Posterior vena cava (tissue), 2 donors: ENCODE measurements at regions of chr2 and their contacts with region 1.

Region 1: GRCh38 chr2:112601751-112602150 is 17.3 kb downstream of the CHCHD5 start:
- DNase-seq: no peak

Region 2: DNA sequence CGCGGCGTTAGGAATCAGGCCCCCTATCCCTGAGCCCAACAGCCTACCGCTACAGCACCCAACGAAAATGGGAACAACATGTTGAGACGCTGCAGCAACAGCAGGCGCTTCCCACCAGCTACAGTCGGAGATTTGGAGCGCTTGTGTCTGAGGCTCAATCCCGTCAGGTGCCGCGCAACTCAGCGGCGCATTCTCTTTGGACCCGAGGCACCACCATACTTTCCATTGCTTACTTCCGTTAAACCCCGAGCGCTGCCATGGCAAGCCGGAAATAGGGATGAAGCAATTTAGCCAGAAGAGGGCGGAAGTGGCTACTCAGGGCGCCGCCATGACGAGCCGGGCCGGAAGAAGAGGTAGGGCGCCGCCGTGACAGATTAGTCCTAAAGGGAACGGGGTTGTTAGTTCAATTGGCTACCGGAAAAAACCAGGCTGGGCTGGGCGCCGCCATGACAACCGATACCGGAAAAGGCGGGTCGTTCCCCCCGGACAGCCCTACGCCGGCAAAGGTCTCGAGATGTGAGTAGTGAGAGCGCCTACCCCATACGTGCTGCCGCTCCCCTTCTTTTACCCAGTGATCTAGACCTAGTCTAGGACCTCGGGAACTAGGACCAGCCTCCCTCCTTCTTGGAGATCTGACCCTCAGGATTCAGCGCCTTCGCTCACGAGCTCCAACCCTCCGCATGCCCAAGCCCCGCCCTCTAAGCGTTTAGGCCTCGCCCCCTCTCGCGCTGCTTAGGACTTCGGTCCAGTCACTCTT is 17.4 kb before region 1 on chr2 and contains the start of gene CHCHD5:
- intact Hi-C with region 1: loop called in 1 of 2 experiments (anchors 1 kb)
- DNase-seq: peak; percentile 99
- total RNA-seq, gene CHCHD5: 12.7 to 23.8 TPM

Region 3: DNA sequence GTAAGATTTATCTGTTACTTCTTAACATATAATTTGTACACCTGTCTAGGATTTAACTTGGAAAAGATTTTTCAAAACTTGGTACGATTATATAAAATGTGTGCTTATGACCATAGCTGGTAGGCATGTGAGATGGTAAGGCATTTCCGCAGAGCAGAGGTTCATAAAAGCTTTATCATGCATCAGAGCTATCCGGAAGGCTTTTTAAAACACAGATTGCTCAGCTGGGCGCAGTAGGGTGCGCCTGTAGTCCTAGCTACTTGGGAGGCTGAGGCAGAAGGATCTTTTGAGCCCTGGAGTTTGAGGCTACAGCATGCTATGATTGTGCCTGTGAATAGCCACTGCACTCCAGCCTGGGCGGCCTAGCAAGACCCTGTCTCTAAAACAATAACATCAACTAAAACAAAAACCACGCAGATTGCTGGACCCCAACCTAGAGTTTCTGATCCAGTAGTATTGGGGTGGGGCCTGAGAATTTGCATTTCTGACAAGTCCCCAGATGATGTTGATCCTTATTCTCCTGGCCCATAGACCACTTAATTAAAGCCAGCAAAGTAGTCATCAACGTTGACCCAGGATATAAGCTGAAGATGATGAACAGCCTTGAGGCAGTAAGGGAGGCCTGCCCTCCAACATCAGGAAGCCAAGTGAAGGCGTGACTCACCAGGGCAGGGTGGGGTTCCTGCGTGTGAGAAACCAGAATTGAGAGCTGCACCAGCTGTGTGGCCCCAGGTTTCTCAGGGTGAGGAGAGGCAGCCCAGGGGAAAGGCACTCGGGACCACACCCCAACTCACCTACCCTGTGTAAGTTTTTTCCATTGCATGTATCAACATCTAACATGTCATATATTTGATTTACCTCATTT is 22.4 kb after region 1 on chr2:
- intact Hi-C with region 1: no loop called
- DNase-seq: peak; percentile 89

Region 4: DNA sequence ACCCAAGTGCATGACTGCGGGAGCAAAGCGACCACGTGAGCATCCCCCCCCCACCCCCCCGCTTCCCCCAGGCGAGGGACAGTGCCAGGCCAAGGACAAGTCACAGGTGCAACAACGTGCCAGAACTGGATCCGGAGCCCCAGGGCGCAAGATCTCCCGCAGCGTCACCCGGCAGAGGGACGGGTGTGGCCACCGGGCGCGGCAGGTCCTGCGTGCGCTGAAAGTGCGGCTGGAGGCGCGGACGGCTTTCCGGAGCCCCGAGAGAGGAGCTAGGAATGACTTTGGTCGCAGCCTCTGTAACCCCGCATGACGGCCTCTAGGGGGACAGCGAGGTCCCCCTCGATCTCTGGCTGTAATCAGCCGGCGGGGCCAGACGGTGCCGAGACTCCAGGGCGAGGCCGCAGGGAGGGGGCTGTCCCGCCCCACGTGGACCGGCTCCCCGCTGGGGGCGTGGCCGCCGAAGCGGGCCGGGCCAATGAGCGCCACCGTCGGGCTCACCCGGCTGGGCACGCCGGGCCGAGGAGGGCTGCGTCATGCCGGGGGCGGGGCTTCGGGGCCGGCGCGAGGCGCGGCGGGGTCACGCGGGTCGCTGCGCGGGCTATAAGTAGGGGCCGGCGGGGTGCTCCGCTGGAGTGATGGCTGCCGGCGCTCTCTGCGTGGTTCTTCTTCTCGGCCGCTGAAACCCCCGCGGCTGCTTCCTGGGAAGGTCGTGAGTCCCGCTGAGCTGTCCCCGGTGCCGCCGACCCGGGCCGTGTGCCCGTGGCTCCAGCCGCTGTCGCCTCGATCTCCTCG is 43.8 kb after region 1 on chr2 and contains the start of gene SLC20A1:
- intact Hi-C with region 1: loop called in 1 of 2 experiments (anchors 10 kb)
- DNase-seq: peak; percentile 99
- total RNA-seq, gene SLC20A1: 41.0 to 43.6 TPM

Region 5: GRCh38 chr2:112726497-112727190 is 124.9 kb after region 1 on chr2:
- intact Hi-C with region 1: loop called in 1 of 2 experiments (anchors 5 kb)
- DNase-seq: peak; percentile 98

Region 6: DNA sequence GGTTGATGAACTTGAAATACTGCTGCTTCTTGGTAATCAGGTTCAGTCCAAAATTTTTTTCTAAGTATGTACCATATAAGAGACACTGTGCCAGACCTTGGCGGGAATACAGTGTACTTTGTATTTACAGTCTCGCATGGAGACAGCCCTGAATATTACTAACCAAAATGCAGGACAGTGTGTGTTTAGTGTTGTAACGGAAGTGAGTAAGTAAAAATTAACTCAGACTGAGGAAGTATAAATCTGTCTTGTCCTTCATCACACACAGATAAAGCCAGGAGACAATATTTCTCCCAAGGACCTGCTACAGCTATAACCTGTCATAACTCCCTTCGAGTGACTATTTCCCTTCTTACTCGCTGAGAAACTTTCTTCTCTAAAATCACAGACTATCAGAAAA is 1365.1 kb after region 1 on chr2:
- intact Hi-C with region 1: no loop called
- DNase-seq: no peak